HCT116 (cell line): ENCODE measurements at regions of chr10 and their contacts with region 1.

Region 1: GRCh38 chr10:29304264-29305030 is 15.6 kb downstream of the LYZL1 start:
- DNase-seq: peak; percentile 62
- ATAC-seq: peak; percentile 95
- H3K4me3 ChIP-seq: no peak overlapping the region
- H3K27ac ChIP-seq: no peak overlapping the region
- H3K4me1 ChIP-seq: no peaks in the 10 kb centered on the region
- H3K27me3 ChIP-seq: no peaks in the 10 kb centered on the region
- CTCF ChIP-seq: peak; percentile 64 to 81 (median 79)
- POLR2A ChIP-seq: no peak
- RAD21 ChIP-seq: peak; percentile 89

Region 2: GRCh38 chr10:28628184-28628893 is 676.1 kb before region 1 on chr10:
- CTCF ChIA-PET with region 1: interaction called, 6 read pairs
- POLR2A ChIA-PET with region 1: no interaction called
- RAD21 ChIA-PET with region 1: interaction called in 1 of 2 experiments, 4 read pairs
- intact Hi-C with region 1: loop called (anchors 1 kb)
- DNase-seq: peak; percentile 63
- ATAC-seq: peak; percentile 96
- H3K4me3 ChIP-seq: no peak overlapping the region
- H3K27ac ChIP-seq: no peak overlapping the region
- H3K4me1 ChIP-seq: peaks cover 3 to 7% of the 10 kb centered on the region in 2 experiments; a peak in 2 of 4 replicates
- H3K27me3 ChIP-seq: no peaks in the 10 kb centered on the region
- CTCF ChIP-seq: peak; percentile 72 to 96 (median 93)
- POLR2A ChIP-seq: no peak
- RAD21 ChIP-seq: peak; percentile 93

Region 3: DNA sequence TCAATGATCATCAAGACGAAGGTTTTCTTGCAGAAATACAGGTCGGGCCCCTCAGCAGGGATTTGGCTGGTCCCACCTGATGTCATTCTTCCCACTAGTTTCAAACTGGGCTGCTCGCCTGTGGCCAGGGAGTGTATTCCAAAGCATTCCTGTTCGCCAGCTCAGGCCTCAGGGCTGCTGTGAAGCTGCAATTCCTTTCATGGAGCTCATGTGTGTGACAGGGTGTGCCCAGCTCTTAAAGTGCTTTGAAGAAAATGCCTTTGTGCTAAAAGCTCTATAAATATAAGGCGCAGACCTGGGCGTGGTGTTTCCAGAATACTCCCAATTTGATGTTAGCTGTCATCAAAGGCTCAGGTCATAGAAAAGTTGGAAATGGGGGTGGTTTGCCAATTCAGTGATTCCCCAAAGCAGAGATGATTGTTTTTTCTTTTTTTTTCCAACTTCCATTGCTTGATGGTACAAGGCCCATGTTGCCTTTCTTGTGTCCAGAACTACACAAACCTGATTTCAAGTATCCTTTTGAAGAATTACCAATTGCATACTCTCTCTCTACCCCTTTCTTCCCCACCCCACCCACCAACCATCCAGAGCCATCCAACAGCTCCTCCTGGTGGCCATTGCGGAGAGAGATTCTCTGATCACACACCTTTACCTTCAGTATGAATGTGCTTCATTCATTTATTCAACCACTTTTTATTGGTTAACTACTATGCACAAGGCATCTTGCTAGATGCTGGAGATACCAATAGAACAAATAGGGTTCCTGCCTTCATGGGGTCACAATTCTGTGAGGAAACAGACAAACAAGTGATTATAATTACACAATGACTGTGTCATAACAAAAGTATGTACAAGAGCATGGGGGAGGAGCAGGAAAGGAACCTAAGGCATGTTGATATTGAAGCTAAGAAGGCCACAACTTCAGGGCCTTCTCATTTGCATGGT is 312.8 kb before region 1 on chr10:
- CTCF ChIA-PET with region 1: interaction called, 5 read pairs
- POLR2A ChIA-PET with region 1: no interaction called
- RAD21 ChIA-PET with region 1: no interaction called
- intact Hi-C with region 1: loop called (anchors 1 kb)
- DNase-seq: peak; percentile 76
- ATAC-seq: peak; percentile 88
- H3K4me3 ChIP-seq: no peak overlapping the region
- H3K27ac ChIP-seq: peak overlapping the region; percentile 23; the same call in 1 of the 2 replicates
- H3K4me1 ChIP-seq: peaks cover 7 to 32% of the 10 kb centered on the region in 2 experiments
- H3K27me3 ChIP-seq: no peaks in the 10 kb centered on the region
- CTCF ChIP-seq: peak; percentile 88 to 94 (median 93)
- POLR2A ChIP-seq: no peak
- RAD21 ChIP-seq: peak; percentile 97

Region 4: GRCh38 chr10:29160110-29160669 is 144.3 kb before region 1 on chr10:
- CTCF ChIA-PET with region 1: interaction called, 3 read pairs
- POLR2A ChIA-PET with region 1: no interaction called
- RAD21 ChIA-PET with region 1: no interaction called
- intact Hi-C with region 1: loop called (anchors 10 kb)
- DNase-seq: peak; percentile 77
- ATAC-seq: peak; percentile 97
- H3K4me3 ChIP-seq: peak overlapping the region in 1 of 2 experiments; percentile 23; a peak in 1 of 4 replicates
- H3K27ac ChIP-seq: peak overlapping the region; percentile 15; the same call in 1 of the 2 replicates
- H3K4me1 ChIP-seq: peaks cover 17 to 21% of the 10 kb centered on the region in 2 experiments
- H3K27me3 ChIP-seq: peaks cover 15% of the 10 kb centered on the region; the same call in 1 of the 2 replicates
- CTCF ChIP-seq: no peak
- POLR2A ChIP-seq: no peak
- RAD21 ChIP-seq: peak; percentile 5; the same call in 1 of the 2 replicates